H1 (cell line): ENCODE measurements at regions of chr4 and their contacts with region 1.

Region 1: GRCh38 chr4:137065311-137065710 is 467.0 kb downstream of the PCDH18 start:
- DNase-seq: no peak
- H3K4me3 ChIP-seq: no peak overlapping the region
- H3K27ac ChIP-seq: no peak overlapping the region
- H3K4me1 ChIP-seq: no peaks in the 10 kb centered on the region
- H3K27me3 ChIP-seq: no peaks in the 10 kb centered on the region
- CTCF ChIP-seq: no peak
- EP300 ChIP-seq: no peak
- POLR2A ChIP-seq: no peak
- RAD21 ChIP-seq: no peak

Region 2: DNA sequence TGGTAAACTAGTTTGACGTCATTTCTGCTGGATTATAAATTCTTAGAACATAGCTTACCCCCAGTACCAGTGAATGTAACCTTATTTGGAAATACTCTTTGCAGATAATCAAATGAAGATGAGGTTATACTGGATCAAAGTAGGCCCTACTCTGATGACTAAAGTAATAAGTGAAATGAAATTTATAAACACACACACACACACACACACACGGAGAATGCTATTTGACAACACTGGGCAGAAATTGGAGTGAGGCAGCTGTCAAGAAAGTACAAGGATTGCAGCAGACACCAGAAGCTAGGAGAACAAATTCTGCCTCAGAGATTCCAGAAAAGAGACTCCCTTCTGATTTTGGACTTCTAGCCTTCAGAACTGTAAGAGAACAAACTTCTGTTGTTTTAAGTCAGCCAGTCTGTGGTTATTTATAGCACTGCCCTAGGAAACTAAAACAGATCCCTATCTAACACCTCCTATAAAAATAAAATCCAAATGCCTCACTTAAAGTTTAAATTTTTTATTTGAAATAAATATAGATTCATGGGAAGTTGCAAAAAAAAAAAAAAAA is 18.3 kb after region 1 on chr4:
- CTCF ChIA-PET with region 1: interaction called, 15 read pairs
- POLR2A ChIA-PET with region 1: no interaction called
- DNase-seq: no peak
- H3K4me3 ChIP-seq: no peak overlapping the region
- H3K27ac ChIP-seq: no peak overlapping the region
- H3K4me1 ChIP-seq: no peaks in the 10 kb centered on the region
- H3K27me3 ChIP-seq: no peaks in the 10 kb centered on the region
- CTCF ChIP-seq: no peak
- EP300 ChIP-seq: no peak
- POLR2A ChIP-seq: no peak
- RAD21 ChIP-seq: no peak

Region 3: GRCh38 chr4:137116144-137116543 is 50.8 kb after region 1 on chr4:
- CTCF ChIA-PET with region 1: no interaction called
- POLR2A ChIA-PET with region 1: no interaction called
- DNase-seq: no peak
- H3K4me3 ChIP-seq: no peak overlapping the region
- H3K27ac ChIP-seq: no peak overlapping the region
- H3K4me1 ChIP-seq: no peaks in the 10 kb centered on the region
- H3K27me3 ChIP-seq: peaks cover 0 to 1% (median 0%) of the 10 kb centered on the region in 4 experiments; a peak in 1 of 7 replicates
- CTCF ChIP-seq: no peak
- EP300 ChIP-seq: no peak
- POLR2A ChIP-seq: no peak
- RAD21 ChIP-seq: no peak

Region 4: DNA sequence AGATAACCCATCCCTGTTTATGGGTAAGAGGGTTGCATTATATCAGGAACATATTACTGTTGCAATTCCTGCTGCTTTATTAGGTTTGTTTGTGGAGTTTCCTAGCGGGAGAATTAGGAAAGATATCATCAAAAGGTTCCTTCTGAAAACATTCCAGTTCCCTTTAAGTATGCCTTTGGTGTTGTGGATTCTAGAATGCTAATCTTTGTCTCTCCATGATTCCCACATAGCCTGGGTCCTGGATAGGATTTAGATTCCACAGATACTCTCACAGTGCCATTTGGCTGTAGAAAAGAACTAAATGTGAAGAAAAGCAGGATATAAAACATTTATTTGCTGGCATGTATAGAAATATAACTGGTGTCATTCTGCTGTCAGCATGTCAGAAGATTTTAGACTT is 128.3 kb after region 1 on chr4:
- CTCF ChIA-PET with region 1: no interaction called
- POLR2A ChIA-PET with region 1: no interaction called
- DNase-seq: no peak
- H3K4me3 ChIP-seq: no peak overlapping the region
- H3K27ac ChIP-seq: no peak overlapping the region
- H3K4me1 ChIP-seq: no peaks in the 10 kb centered on the region
- H3K27me3 ChIP-seq: no peaks in the 10 kb centered on the region
- CTCF ChIP-seq: no peak
- EP300 ChIP-seq: no peak
- POLR2A ChIP-seq: no peak
- RAD21 ChIP-seq: no peak